Right cardiac atrium (tissue), 5 donors: ENCODE measurements at regions of chr9 and their contacts with region 1.

Region 1: DNA sequence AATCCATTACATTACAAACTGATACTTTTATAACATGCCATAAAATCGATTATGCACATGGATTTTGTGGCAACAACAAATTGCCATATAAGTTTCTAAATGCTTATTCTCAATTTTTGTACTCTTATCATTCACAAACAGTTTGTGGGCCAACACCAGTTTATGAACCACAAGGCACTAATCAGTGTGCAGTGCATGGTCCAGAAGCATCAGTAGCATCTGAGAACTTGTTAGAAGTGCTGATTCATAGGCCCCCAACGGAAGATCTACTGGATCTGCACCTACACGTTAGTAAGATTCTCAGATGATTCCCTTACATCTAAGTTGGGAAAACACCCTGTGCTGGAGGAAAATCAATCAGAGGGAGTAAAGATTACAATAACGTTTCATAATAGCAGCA is 242.8 kb downstream of the TRPM3 start:
- DNase-seq: no peak
- ATAC-seq: no peak
- H3K4me3 ChIP-seq: no peak overlapping the region
- H3K27ac ChIP-seq: no peak overlapping the region
- H3K4me1 ChIP-seq: no peaks in the 10 kb centered on the region
- H3K27me3 ChIP-seq: no peaks in the 10 kb centered on the region

Region 2: GRCh38 chr9:70917277-70917676 is 38.7 kb after region 1 on chr9:
- intact Hi-C with region 1: loop called in 1 of 4 experiments (anchors 5 kb)
- DNase-seq: no peak
- ATAC-seq: no peak
- H3K4me3 ChIP-seq: no peak overlapping the region
- H3K27ac ChIP-seq: no peak overlapping the region
- H3K4me1 ChIP-seq: no peaks in the 10 kb centered on the region
- H3K27me3 ChIP-seq: no peaks in the 10 kb centered on the region